ENCODE measurements at regions of chr1 and their contacts with region 1.

Region 1: GRCh38 chr1:152479792-152480595 is 30.6 kb upstream of the LCE5A start:
- H3K4me3 ChIP-seq: no peak overlapping the region
- H3K27ac ChIP-seq: no peak overlapping the region
- H3K4me1 ChIP-seq: no peaks in the 10 kb centered on the region
- CTCF ChIP-seq: no peak

Region 2: GRCh38 chr1:152325111-152325510 is 154.9 kb before region 1 on chr1 and contains the start of gene FLG:
- CTCF ChIA-PET with region 1: no interaction called
- POLR2A ChIA-PET with region 1: no interaction called
- H3K4me3 ChIP-seq: no peak within 1 kb of the TSS
- H3K27ac ChIP-seq: no peak within 1 kb of the TSS
- H3K4me1 ChIP-seq: no peaks in the 10 kb centered on the region
- CTCF ChIP-seq: no peak

Region 3: DNA sequence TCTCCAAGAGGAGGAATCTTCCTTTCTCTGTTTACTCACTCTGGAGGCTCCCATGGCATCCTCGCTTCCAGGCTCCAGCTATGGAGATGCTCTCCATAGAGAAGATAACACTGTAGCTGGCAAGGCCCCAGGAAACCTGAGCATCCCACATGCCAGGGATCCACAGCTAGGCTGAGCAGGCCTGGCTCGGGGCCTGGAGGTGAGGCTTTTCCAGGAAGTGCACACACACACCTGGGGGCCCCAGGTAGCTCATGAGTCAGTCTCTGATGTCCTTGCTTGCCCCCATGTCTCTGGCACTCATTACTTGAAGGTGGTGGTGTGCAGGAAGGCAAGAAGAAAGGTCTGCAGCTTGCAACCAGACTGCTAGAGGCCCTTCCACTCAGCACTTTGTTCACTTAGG is 25.1 kb after region 1 on chr1:
- CTCF ChIA-PET with region 1: interaction called, 12 read pairs
- POLR2A ChIA-PET with region 1: no interaction called
- H3K4me3 ChIP-seq: no peak overlapping the region
- H3K27ac ChIP-seq: no peak overlapping the region
- H3K4me1 ChIP-seq: no peaks in the 10 kb centered on the region
- CTCF ChIP-seq: no peak

Measured in HEK293 (cell line).